HepG2 (cell line): ENCODE measurements at regions of chr17 and their contacts with region 1.

Region 1: DNA sequence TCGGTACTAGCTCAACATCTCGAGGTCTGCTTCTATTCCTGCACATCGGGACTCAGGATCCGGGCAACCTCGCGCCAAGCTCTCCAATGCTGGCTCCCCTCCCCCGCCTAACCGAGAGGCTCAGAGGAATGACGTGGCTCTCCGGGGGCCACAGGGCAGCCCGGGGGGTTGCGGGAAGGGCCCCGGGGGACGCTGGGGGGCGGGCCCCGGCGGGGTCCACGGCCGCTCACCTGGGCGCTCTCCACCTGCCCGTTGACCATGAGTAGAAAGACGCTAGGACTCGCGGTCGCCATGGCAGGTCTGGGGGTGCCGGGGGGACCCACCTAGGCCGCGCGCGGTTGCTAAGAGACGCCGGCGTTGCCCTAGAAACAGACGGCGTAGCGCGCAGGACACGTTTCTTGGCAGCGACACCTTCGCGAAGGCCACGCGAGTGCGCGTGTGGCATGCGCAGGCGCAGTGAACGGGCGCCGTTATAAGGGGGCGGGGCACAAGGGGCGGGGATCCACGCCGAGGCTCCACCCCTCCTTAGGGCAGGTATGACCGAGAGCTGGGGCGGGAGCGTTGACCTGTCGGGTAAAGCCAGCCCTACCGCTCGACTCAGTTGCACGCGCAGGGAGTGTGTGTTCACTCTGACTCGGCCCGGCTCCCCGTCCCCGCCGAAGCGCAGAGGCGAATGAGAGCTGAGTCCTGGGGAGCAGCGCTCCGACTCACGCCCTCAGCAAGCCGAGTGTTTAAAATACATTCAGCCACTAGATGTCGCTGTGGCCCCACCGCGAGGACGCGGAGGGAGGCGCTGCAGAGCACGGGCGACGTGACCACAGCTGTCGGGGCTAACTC is at the start of gene B9D1:
- DNase-seq: peak; percentile 77
- ATAC-seq: peak; percentile 74
- H3K4me3 ChIP-seq: peak within 1 kb of the TSS; percentile 65 to 93 (median 74)
- H3K27ac ChIP-seq: peak within 1 kb of the TSS; percentile 74
- H3K4me1 ChIP-seq: peaks cover 58% of the 10 kb centered on the region
- H3K27me3 ChIP-seq: no peaks in the 10 kb centered on the region
- CTCF ChIP-seq: peak; percentile 100
- EP300 ChIP-seq: no peak; a peak in 1 of 4 replicates
- POLR2A ChIP-seq: peak in 1 of 2 experiments; percentile 72; a peak in 3 of 4 replicates
- RAD21 ChIP-seq: peak; percentile 99
- total RNA-seq, gene B9D1: 26.2 and 27.7 TPM in 2 replicates

Region 2: GRCh38 chr17:19377602-19378392 is 15.3 kb after region 1 on chr17:
- CTCF ChIA-PET with region 1: interaction called, 3 read pairs
- POLR2A ChIA-PET with region 1: interaction called, 51 read pairs
- in situ Hi-C with region 1: no loop called
- intact Hi-C with region 1: loop called (anchors 1 kb)
- DNase-seq: peak; percentile 98
- ATAC-seq: peak; percentile 89
- H3K4me3 ChIP-seq: peak overlapping the region; percentile 82 to 96 (median 87)
- H3K27ac ChIP-seq: peak overlapping the region; percentile 93
- H3K4me1 ChIP-seq: peaks cover 33% of the 10 kb centered on the region
- H3K27me3 ChIP-seq: peaks cover 0 to 2% of the 10 kb centered on the region in 2 experiments; a peak in 1 of 5 replicates
- CTCF ChIP-seq: peak; percentile 56
- EP300 ChIP-seq: no peak
- POLR2A ChIP-seq: peak; percentile 84 to 86
- RAD21 ChIP-seq: peak; percentile 49; the same call in 1 of the 2 replicates

Region 3: GRCh38 chr17:19398301-19399181 is 36.0 kb after region 1 on chr17:
- CTCF ChIA-PET with region 1: no interaction called
- POLR2A ChIA-PET with region 1: no interaction called
- in situ Hi-C with region 1: no loop called
- intact Hi-C with region 1: no loop called
- DNase-seq: no peak
- ATAC-seq: peak; percentile 65
- H3K4me3 ChIP-seq: no peak overlapping the region
- H3K27ac ChIP-seq: no peak overlapping the region
- H3K4me1 ChIP-seq: peaks cover 20% of the 10 kb centered on the region
- H3K27me3 ChIP-seq: no peaks in the 10 kb centered on the region
- CTCF ChIP-seq: no peak
- EP300 ChIP-seq: no peak
- POLR2A ChIP-seq: no peak
- RAD21 ChIP-seq: no peak